Activated CD8-positive, alpha-beta memory T cell treated with anti-CD3 and anti-CD28 coated beads, Interleukin-2, amount 10 ng/mL, durations not matched to agents 7 days and 5 days (primary cell): ENCODE measurements at regions of chr10 and their contacts with region 1.

Region 1: GRCh38 chr10:119207367-119207668 is at the start of gene GRK5:
- DNase-seq: peak; percentile 98
- ATAC-seq: peak; percentile 89
- H3K4me3 Mint-ChIP-seq: peak within 1 kb of the TSS; percentile 89
- H3K27ac Mint-ChIP-seq: peak within 1 kb of the TSS; percentile 97
- H3K4me1 Mint-ChIP-seq: peaks cover 44% of the 10 kb centered on the region
- H3K27me3 Mint-ChIP-seq: no peaks in the 10 kb centered on the region
- total RNA-seq, gene GRK5: 23.2 to 29.5 TPM

Region 2: DNA sequence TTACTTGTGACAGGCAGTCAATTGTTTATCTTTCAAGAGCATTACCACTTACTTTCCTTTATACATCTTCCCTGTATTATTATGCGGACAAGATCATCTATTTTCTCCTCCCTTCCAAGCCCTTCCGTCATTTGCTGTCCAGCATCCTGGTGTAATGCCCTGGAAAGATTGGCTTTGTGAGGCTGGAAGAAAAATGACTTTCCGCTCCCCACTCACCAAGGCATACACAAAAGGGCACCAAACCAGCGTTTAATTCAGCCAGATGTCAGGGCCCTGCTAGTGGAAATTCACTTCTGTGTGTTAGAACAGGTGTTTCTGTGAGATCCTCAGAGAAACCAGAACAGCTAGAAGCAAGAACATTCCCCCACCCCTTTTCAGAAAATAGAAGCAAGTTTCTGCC is 305.9 kb before region 1 on chr10:
- CTCF ChIA-PET with region 1: no interaction called
- DNase-seq: no peak
- ATAC-seq: no peak
- H3K4me3 Mint-ChIP-seq: no peak overlapping the region
- H3K27ac Mint-ChIP-seq: no peak overlapping the region
- H3K4me1 Mint-ChIP-seq: no peaks in the 10 kb centered on the region
- H3K27me3 Mint-ChIP-seq: peaks cover 17% of the 10 kb centered on the region

Region 3: DNA sequence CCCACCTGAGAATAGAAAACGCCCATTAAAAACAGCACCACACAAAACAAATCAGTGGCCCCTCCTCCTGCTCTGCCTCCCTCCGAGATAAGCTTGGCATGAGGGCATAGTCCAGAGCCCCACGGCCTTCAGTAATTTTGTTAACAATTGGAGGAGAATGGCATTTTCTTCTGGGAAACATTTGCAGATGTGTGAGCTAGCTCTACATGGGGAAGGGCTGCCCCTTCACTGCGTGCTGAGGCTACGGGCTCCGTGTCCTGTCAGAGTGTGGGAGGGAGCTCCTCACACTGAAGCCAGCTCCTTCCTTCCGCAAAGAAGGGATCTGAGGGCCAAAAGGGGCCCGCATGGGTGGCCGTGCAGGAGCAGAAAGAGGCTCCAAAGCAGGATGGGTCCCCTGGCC is 15.2 kb after region 1 on chr10:
- CTCF ChIA-PET with region 1: interaction called, 10 read pairs
- DNase-seq: no peak
- ATAC-seq: no peak
- H3K4me3 Mint-ChIP-seq: no peak overlapping the region
- H3K27ac Mint-ChIP-seq: no peak overlapping the region
- H3K4me1 Mint-ChIP-seq: peaks cover 9% of the 10 kb centered on the region
- H3K27me3 Mint-ChIP-seq: no peaks in the 10 kb centered on the region

Region 4: DNA sequence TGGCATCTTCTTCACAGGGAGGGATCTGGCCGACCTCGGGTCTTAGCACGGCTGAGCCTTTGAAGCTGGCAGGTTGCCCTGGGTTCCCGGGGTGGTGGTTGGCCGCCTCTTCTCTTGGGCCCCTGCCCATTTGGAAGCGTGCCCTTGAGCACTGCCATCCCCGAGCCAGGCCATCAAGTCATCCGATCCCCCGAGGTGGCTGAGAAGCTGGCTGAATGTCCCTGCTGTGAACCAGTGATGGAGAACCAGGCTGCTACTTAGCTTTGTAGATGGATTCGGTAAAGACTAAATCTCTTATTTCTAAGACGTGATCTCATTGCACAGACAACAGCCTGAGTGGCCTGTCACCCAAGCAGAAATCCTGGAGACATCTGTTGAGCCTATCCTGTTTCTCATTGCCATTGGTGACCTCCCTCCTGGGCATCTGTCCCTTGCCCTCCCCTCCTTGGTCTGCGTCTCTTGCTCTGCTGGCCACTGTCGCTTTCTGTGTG is 74.3 kb after region 1 on chr10:
- CTCF ChIA-PET with region 1: interaction called, 10 read pairs
- DNase-seq: no peak
- ATAC-seq: no peak
- H3K4me3 Mint-ChIP-seq: no peak overlapping the region
- H3K27ac Mint-ChIP-seq: no peak overlapping the region
- H3K4me1 Mint-ChIP-seq: peaks cover 45% of the 10 kb centered on the region
- H3K27me3 Mint-ChIP-seq: no peaks in the 10 kb centered on the region

Region 5: DNA sequence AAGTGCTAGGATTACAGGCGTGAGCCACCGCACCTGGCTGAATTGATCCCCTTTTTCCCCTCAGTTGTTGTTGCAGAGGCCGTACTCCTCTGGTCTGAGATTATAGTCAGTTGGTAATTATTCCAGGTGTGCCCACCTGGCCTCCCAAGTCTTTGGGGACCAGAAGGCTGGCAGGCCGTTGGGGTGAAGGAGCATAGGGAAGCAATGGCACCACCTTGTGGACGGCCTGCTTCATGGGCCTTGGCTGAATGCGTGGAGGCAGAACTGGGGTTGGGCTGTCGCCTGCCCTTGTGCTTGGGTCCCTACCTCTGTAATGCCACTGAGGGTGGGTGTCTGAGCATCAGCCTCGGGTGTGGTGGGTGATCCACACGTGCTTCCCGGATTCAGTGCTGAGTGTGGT is 209.5 kb after region 1 on chr10:
- CTCF ChIA-PET with region 1: interaction called, 38 read pairs
- DNase-seq: peak; percentile 80
- ATAC-seq: peak; percentile 85
- H3K4me3 Mint-ChIP-seq: no peak overlapping the region
- H3K27ac Mint-ChIP-seq: no peak overlapping the region
- H3K4me1 Mint-ChIP-seq: no peaks in the 10 kb centered on the region
- H3K27me3 Mint-ChIP-seq: no peaks in the 10 kb centered on the region

Region 6: DNA sequence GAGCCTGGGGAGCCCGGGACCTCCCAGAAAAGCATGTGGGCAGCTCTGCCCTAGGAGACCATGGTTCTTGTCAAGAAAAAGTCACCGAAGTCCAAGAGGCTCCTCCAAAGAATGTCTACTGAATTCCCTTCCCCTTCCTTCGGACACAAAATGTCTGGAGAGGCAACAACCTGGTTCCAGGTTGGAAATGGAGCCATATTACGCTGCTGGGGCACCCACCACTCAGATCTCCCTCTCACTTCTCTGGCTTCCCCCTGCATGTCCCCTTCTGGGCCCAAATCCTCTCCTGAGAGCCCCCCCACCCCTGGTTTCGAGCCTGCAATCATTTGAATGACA is 282.6 kb after region 1 on chr10:
- CTCF ChIA-PET with region 1: interaction called, 12 read pairs
- DNase-seq: no peak
- ATAC-seq: no peak
- H3K4me3 Mint-ChIP-seq: peak overlapping the region; percentile 13
- H3K27ac Mint-ChIP-seq: peak overlapping the region; percentile 92
- H3K4me1 Mint-ChIP-seq: peaks cover 46% of the 10 kb centered on the region
- H3K27me3 Mint-ChIP-seq: no peaks in the 10 kb centered on the region